CD4-positive, alpha-beta T cell (primary cell): ENCODE measurements at regions of chr10 and their contacts with region 1.

Region 1: GRCh38 chr10:58268870-58269605 is at the start of gene CISD1:
- DNase-seq: peak; percentile 87 to 100 (median 92)
- ATAC-seq: peak; percentile 63
- H3K4me3 ChIP-seq: peak within 1 kb of the TSS; percentile 81
- H3K4me3 Mint-ChIP-seq: peak within 1 kb of the TSS; percentile 96
- H3K27ac ChIP-seq: peak within 1 kb of the TSS; percentile 81 to 87
- H3K27ac Mint-ChIP-seq: peak within 1 kb of the TSS; percentile 91
- H3K4me1 ChIP-seq: peaks cover 22% of the 10 kb centered on the region
- H3K4me1 Mint-ChIP-seq: peaks cover 41% of the 10 kb centered on the region
- H3K27me3 ChIP-seq: no peaks in the 10 kb centered on the region
- H3K27me3 Mint-ChIP-seq: no peaks in the 10 kb centered on the region
- CTCF ChIP-seq: no peak
- total RNA-seq, gene CISD1: 1.5 to 2.0 TPM

Region 2: GRCh38 chr10:58209669-58210068 is 59.4 kb before region 1 on chr10:
- CTCF ChIA-PET with region 1: no interaction called
- POLR2A ChIA-PET with region 1: interaction called, 4 read pairs
- intact Hi-C with region 1: loop called in 1 of 2 experiments (anchors 5 kb)
- DNase-seq: no peak
- ATAC-seq: no peak
- H3K4me3 ChIP-seq: no peak overlapping the region
- H3K4me3 Mint-ChIP-seq: no peak overlapping the region
- H3K27ac ChIP-seq: no peak overlapping the region
- H3K27ac Mint-ChIP-seq: no peak overlapping the region
- H3K4me1 ChIP-seq: no peaks in the 10 kb centered on the region
- H3K4me1 Mint-ChIP-seq: peaks cover 25% of the 10 kb centered on the region
- H3K27me3 ChIP-seq: no peaks in the 10 kb centered on the region
- H3K27me3 Mint-ChIP-seq: no peaks in the 10 kb centered on the region
- CTCF ChIP-seq: no peak

Region 3: DNA sequence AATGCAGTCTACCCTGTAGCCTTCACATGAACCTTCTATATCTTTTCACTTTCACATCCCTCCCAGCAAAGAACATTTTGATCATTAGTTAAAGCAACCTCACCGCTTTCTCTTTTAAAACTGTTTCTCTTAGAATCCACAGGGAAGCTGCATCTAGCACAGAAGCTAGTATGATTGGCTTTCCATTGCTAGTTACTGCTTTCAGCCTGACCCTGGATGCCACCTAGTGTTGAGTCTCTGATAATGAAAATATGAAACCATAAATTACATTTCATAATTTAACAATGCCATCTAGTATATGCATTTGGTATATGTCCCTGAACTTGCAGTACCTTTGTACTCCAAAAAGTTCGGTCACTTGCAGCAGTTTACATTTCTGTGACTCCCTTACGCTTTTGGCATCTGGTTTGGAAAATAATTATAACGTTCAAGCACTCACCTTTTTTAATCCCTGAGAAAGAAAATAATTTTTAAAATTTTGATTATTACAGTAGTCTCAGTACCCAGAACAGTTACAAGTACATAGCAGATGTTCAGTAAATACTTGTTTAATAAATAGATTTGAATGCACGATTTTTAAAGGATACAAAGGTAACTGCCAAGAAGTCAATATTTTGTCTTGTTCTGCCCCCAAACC is 22.6 kb after region 1 on chr10:
- CTCF ChIA-PET with region 1: interaction called, 5 read pairs
- POLR2A ChIA-PET with region 1: interaction called, 3 read pairs
- intact Hi-C with region 1: loop called in 1 of 2 experiments (anchors 2 kb)
- DNase-seq: peak in 8 of 14 experiments; percentile 4 to 69 (median 32)
- ATAC-seq: peak; percentile 74
- H3K4me3 ChIP-seq: no peak overlapping the region
- H3K4me3 Mint-ChIP-seq: no peak overlapping the region
- H3K27ac ChIP-seq: no peak overlapping the region
- H3K27ac Mint-ChIP-seq: no peak overlapping the region
- H3K4me1 ChIP-seq: no peaks in the 10 kb centered on the region
- H3K4me1 Mint-ChIP-seq: no peaks in the 10 kb centered on the region
- H3K27me3 ChIP-seq: no peaks in the 10 kb centered on the region
- H3K27me3 Mint-ChIP-seq: no peaks in the 10 kb centered on the region
- CTCF ChIP-seq: peak; percentile 92

Region 4: DNA sequence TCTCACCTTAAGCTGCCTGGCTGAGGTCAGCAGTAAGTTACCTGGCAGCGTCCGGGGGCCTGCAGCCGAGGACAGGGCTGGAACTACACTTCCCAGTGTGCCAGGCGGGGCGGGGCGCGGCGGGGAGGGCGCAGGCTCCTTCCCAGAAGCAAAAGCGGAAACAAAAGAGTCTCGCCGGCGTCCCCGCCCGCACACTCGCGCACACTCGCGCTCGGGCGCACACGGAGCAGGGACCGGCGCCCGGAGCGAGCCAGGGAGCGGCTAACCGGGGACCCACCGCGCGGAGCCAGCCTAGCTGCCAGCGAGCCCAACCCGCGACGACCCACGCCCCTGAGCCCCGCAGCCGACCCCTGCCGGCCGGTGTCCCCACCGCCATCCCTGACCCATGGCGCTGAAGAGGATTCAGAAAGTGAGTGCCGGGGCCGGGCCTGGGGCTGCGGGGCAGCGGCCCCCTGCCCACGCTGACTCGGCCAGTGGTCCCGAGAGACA is 65.8 kb after region 1 on chr10 and contains the start of gene UBE2D1:
- CTCF ChIA-PET with region 1: no interaction called
- POLR2A ChIA-PET with region 1: interaction called, 16 read pairs
- intact Hi-C with region 1: loop called in 1 of 2 experiments (anchors 2 kb)
- DNase-seq: peak; percentile 65 to 87 (median 80)
- ATAC-seq: peak; percentile 98
- H3K4me3 ChIP-seq: peak within 1 kb of the TSS; percentile 79
- H3K4me3 Mint-ChIP-seq: peak within 1 kb of the TSS; percentile 92
- H3K27ac ChIP-seq: no peak within 1 kb of the TSS
- H3K27ac Mint-ChIP-seq: peak within 1 kb of the TSS; percentile 50
- H3K4me1 ChIP-seq: peaks cover 12% of the 10 kb centered on the region
- H3K4me1 Mint-ChIP-seq: peaks cover 45% of the 10 kb centered on the region
- H3K27me3 ChIP-seq: no peaks in the 10 kb centered on the region
- H3K27me3 Mint-ChIP-seq: peaks cover 6% of the 10 kb centered on the region
- CTCF ChIP-seq: no peak
- total RNA-seq, gene UBE2D1: 6.0 to 7.8 TPM